Natural killer cell (primary cell): ENCODE measurements at regions of chr1 and their contacts with region 1.

Region 1: GRCh38 chr1:168499688-168500049 is 44.1 kb downstream of the XCL2 start:
- DNase-seq: no peak
- ATAC-seq: peak in 1 of 3 donors; percentile 29
- H3K4me3 ChIP-seq: no peak overlapping the region
- H3K4me3 Mint-ChIP-seq: no peak overlapping the region
- H3K27ac ChIP-seq: no peak overlapping the region
- H3K27ac Mint-ChIP-seq: no peak overlapping the region
- H3K4me1 ChIP-seq: peaks cover 14% of the 10 kb centered on the region
- H3K4me1 Mint-ChIP-seq: peaks cover 40 to 51% of the 10 kb centered on the region in 2 donors
- H3K27me3 ChIP-seq: no peaks in the 10 kb centered on the region
- H3K27me3 Mint-ChIP-seq: no peaks in the 10 kb centered on the region
- CTCF ChIP-seq: no peak

Region 2: GRCh38 chr1:168483539-168483938 is 16.1 kb before region 1 on chr1:
- intact Hi-C with region 1: loop called (anchors 2 kb)
- DNase-seq: no peak
- ATAC-seq: no peak
- H3K4me3 ChIP-seq: no peak overlapping the region
- H3K4me3 Mint-ChIP-seq: peak overlapping the region; percentile 5
- H3K27ac ChIP-seq: peak overlapping the region; percentile 16
- H3K27ac Mint-ChIP-seq: peak overlapping the region; percentile 73 to 87
- H3K4me1 ChIP-seq: peaks cover 31% of the 10 kb centered on the region
- H3K4me1 Mint-ChIP-seq: peaks cover 83 to 87% of the 10 kb centered on the region in 2 donors
- H3K27me3 ChIP-seq: no peaks in the 10 kb centered on the region
- H3K27me3 Mint-ChIP-seq: no peaks in the 10 kb centered on the region
- CTCF ChIP-seq: no peak

Region 3: DNA sequence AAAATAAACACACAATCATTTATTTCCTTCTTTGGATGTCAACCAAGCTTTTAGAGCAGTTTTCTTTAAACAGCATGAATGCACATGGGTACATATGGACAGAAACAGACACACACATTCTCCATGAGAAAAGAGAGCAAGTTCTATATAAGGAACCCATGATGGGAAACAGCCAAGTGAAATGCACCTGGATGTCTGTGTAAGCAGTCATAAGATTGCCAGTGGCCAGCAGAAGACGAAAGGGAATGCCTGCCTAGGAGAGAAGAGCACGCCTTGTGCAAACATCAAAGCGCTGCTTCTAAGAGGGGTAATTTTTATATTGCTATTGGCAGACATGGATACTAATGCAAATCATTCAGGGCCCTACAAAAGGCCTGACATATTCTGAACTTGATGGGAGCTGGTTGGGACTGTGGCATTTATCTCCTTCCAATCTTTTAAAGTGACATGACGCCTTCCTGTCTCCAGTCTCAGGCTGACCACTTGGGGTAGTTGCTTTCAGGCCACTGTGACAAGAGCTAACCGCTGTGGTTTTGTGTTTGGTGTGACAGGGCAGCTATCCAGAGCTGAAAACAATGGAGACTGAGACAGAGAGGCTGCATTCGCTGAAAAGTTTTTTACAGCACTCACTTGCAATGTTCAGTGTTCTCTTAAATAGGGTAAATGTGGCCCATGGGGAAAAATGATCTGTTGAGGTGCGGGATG is 304.3 kb after region 1 on chr1:
- intact Hi-C with region 1: no loop called
- DNase-seq: no peak
- ATAC-seq: no peak
- H3K4me3 ChIP-seq: no peak overlapping the region
- H3K4me3 Mint-ChIP-seq: no peak overlapping the region
- H3K27ac ChIP-seq: no peak overlapping the region
- H3K27ac Mint-ChIP-seq: no peak overlapping the region
- H3K4me1 ChIP-seq: peaks cover 4% of the 10 kb centered on the region
- H3K4me1 Mint-ChIP-seq: peaks cover 0 to 9% of the 10 kb centered on the region in 2 donors
- H3K27me3 ChIP-seq: no peaks in the 10 kb centered on the region
- H3K27me3 Mint-ChIP-seq: peaks cover 7 to 18% of the 10 kb centered on the region in 2 donors
- CTCF ChIP-seq: no peak